Gastrocnemius medialis (tissue), 4 donors: ENCODE measurements at regions of chr9 and their contacts with region 1.

Region 1: DNA sequence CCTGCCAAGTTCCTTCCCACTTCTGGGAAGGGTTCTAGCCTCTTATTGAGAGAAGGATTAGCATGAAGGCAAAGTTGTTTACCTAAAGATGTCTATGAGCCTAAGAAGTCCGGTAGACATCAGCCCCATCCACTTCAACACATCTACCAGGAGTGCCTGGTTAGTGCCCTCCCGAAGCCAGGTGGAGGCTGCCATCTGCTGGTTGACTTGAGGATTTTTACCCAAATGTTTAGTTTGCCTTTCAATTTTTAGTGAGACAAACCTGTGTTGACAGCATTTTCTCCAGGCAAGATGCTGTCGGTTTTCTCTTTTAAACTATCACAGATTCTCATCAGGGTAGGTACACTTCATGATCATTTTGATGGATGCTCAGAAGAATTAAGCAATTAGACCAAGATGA is 83.6 kb upstream of the TNFSF8 start:
- DNase-seq: peak; percentile 34 to 44
- ATAC-seq: peak in 1 of 2 donors; percentile 54
- H3K4me3 ChIP-seq: no peak overlapping the region
- H3K27ac ChIP-seq: no peak overlapping the region
- H3K4me1 ChIP-seq: no peaks in the 10 kb centered on the region
- H3K27me3 ChIP-seq: no peaks in the 10 kb centered on the region
- CTCF ChIP-seq: peak; percentile 49 to 74 (median 67)
- POLR2A ChIP-seq: no peak

Region 2: DNA sequence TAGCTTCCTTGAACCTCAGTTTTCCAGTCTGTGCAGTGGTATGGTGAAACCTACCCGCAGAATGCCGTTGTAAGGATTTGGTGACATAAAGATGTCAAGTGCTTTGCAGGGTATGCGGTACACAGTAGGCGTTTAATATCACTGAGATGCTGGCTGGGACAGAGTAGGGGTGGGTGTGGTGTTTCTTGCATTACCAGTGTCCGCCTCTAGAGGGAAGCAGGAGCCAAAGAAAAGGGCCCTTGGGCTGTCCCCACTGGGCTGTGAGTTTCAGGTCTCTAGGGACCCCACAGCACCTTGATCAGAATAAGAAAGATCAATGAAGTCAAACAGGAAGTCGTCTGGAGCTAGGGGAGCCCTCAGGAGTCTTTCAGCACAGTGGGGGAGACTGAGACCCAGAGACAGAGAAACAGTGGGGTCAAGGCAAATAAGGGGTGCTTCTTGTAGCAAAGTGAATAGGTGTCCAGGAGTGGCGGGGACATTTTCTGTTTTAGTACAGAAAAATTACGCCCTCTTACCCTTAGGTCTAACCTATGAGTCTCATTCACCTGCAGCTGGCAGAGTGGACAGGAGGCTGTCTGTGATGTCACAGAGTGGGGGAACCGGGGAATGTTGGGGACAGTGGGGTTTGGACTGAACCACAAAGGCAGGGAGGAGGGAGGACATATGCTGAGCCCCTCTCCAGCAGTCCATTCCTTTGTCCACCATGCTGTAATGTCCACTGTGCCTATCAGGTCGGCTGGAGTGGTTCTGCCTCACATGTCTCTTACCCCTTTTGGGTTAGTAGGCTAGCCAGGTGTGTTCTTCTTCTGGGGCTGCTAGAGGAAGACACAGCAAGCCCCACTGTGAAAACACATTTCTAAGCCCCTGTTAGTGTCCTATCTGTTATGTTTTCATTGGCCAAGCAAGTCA is 351.7 kb before region 1 on chr9:
- in situ Hi-C with region 1: no loop called
- intact Hi-C with region 1: loop called (anchors 10 kb)
- DNase-seq: no peak
- ATAC-seq: peak in 1 of 2 donors; percentile 58
- H3K4me3 ChIP-seq: no peak overlapping the region
- H3K27ac ChIP-seq: no peak overlapping the region
- H3K4me1 ChIP-seq: no peaks in the 10 kb centered on the region
- H3K27me3 ChIP-seq: peaks cover 0 to 9% (median 0%) of the 10 kb centered on the region in 3 donors
- CTCF ChIP-seq: peak in 4 of 5 experiments; percentile 59 to 68 (median 64)
- POLR2A ChIP-seq: no peak

Region 3: GRCh38 chr9:114738581-114739316 is 275.2 kb before region 1 on chr9:
- in situ Hi-C with region 1: loop called (anchors 5 to 10 kb)
- intact Hi-C with region 1: loop called (anchors 2 kb)
- DNase-seq: peak; percentile 35
- ATAC-seq: peak in 1 of 2 donors; percentile 42
- H3K4me3 ChIP-seq: no peak overlapping the region
- H3K27ac ChIP-seq: no peak overlapping the region
- H3K4me1 ChIP-seq: no peaks in the 10 kb centered on the region
- H3K27me3 ChIP-seq: no peaks in the 10 kb centered on the region
- CTCF ChIP-seq: peak; percentile 50 to 71 (median 70)
- POLR2A ChIP-seq: no peak

Region 4: DNA sequence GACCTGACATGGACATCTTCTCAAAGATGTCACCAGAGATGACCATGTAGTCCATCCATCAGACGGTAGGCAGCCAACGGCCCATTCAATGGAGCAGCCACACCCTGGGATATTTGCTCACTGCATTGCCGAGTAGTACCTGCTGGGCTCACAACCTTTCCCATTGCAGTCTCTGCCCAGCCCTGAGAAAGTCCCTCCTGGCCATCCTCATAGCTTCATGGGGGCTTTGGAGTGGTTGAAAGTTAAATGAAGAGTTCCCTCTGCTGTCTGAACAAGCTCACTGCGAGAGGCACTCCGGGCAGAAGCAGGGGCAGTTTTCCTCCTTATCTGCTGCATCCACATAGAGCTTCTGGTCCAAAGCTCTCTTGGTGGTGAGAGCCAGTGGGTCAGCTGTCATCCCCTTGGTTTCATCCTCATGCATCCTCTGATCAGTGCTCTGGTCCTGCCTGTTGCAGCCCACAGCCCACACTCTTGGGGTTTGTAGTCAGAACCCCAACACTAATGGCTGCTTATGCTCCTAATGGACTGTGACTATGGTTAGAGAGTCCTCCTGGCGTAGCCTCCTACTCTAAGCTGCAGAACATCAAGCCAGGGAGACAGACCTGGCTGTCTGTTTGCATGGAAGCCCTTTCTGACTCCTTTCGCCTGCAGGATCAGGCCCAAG is 107.0 kb before region 1 on chr9:
- in situ Hi-C with region 1: loop called in 1 of 4 experiments (anchors 10 kb)
- intact Hi-C with region 1: no loop called
- DNase-seq: no peak
- ATAC-seq: no peak
- H3K4me3 ChIP-seq: no peak overlapping the region
- H3K27ac ChIP-seq: no peak overlapping the region
- H3K4me1 ChIP-seq: no peaks in the 10 kb centered on the region
- H3K27me3 ChIP-seq: no peaks in the 10 kb centered on the region
- CTCF ChIP-seq: no peak
- POLR2A ChIP-seq: no peak

Region 5: DNA sequence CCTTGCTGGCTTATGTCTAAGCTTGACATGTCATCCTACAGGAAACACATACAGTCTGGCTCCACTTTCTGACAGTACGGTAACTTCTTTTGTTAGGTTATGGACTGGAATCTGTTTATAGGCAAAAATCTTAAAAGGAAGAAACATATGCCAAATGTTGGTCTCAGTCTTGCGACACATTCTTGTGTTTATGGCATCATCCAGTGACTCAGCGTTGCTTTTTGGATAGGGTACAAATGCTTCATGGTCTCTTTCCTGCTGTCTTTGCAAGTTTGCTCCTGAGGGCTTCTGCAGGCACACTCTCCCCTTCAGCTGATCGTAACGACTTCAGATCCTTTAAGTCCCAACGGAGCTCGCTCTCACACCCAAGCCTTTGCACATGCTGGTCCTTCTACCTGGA is 60.1 kb before region 1 on chr9:
- in situ Hi-C with region 1: no loop called
- intact Hi-C with region 1: no loop called
- DNase-seq: peak; percentile 31 to 41
- ATAC-seq: peak; percentile 64 to 77
- H3K4me3 ChIP-seq: no peak overlapping the region
- H3K27ac ChIP-seq: no peak overlapping the region
- H3K4me1 ChIP-seq: no peaks in the 10 kb centered on the region
- H3K27me3 ChIP-seq: no peaks in the 10 kb centered on the region
- CTCF ChIP-seq: no peak
- POLR2A ChIP-seq: no peak

Region 6: DNA sequence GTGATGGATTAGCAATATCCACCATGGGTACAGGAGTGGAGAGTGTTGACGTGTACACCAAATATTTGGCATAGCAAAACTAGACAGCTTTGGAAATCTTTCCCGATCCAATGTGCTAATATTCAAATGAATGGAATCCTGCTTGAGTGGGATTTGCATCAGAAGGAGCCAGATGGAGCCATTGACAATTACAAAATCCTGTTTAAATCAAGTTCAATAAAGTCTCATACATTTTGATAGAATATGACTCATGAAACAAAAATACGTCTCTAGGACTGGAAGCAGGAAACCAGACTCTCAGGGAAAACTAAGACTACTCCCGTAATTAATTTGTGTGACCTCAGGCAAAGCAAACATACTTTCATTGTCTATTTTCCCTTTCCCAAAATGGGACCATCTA is 90.9 kb after region 1 on chr9:
- in situ Hi-C with region 1: no loop called
- intact Hi-C with region 1: no loop called
- DNase-seq: no peak
- ATAC-seq: no peak
- H3K4me3 ChIP-seq: no peak overlapping the region
- H3K27ac ChIP-seq: no peak overlapping the region
- H3K4me1 ChIP-seq: no peaks in the 10 kb centered on the region
- H3K27me3 ChIP-seq: no peaks in the 10 kb centered on the region
- CTCF ChIP-seq: no peak
- POLR2A ChIP-seq: no peak